GM12878 (cell line): ENCODE measurements at regions of chr15 and their contacts with region 1.

Region 1: DNA sequence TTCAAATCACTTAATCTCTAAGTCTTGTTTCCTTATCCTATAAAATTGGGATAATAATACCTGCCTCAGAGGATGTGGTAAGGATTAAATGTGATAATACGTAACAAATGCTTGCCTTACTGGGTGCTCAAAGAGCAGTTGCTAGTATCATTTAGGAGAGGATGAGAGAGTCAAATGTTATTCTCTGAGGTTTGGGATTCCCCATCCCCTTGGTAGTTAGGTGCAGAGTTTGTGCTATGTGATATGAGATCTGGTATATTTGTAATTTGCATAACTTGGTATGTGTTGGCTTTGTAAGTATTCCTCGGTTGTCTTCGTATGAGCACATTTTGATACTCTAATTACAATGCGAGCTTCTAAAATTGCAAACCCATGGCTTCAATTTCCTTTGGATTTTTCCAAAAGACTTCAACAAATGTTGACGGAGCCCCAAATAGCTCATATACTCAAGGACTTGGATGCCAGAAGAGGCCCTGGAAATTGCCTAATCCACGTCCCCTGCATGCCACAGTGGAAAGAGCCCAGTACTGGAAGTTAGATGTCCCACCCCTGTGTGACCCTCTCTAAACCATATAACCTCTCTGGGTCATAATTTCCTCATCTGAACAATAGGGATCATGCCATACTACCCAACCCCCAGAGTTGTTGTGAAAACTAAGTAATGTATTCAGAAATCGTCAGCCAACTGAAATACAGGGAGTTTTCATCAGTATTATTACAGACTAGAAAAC is 85.0 kb downstream of the FBN1 start:
- DNase-seq: peak; percentile 60
- ATAC-seq: peak; percentile 93
- H3K4me3 ChIP-seq: no peak overlapping the region
- H3K27ac ChIP-seq: no peak overlapping the region
- H3K4me1 ChIP-seq: no peaks in the 10 kb centered on the region
- H3K27me3 ChIP-seq: no peaks in the 10 kb centered on the region
- CTCF ChIP-seq: no peak
- EP300 ChIP-seq: peak; percentile 58 to 65; a peak in 2 of 4 replicates
- POLR2A ChIP-seq: no peak
- RAD21 ChIP-seq: no peak

Region 2: DNA sequence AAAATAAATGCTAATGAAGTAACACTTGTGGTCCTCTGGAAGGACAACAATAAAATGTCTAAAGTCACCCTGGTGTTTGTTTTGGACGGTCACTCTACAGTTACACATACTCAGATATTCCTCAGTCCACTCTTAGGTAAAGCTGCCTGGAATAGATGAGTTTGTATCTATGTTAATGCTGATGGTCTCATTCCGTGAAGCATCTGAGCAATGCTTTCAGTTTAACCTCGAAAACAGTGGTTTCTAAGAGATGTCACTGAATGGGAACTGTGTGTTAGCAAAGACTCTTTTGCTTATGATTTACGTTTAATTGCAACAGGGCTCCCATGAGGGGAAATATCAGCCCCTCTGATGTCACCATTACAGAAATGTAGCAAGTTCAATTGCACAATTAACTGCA is 35.9 kb after region 1 on chr15:
- CTCF ChIA-PET with region 1: interaction called, 3 read pairs
- POLR2A ChIA-PET with region 1: interaction called, 6 read pairs
- RAD21 ChIA-PET with region 1: interaction called, 9 read pairs
- SMC1A ChIA-PET with region 1: interaction called, 10 read pairs
- in situ Hi-C with region 1: no loop called
- intact Hi-C with region 1: no loop called
- DNase-seq: peak; percentile 36
- ATAC-seq: peak; percentile 76
- H3K4me3 ChIP-seq: peak overlapping the region; percentile 39; the same call in 1 of the 2 replicates
- H3K27ac ChIP-seq: peak overlapping the region; percentile 49
- H3K4me1 ChIP-seq: peaks cover 11% of the 10 kb centered on the region
- H3K27me3 ChIP-seq: no peaks in the 10 kb centered on the region
- CTCF ChIP-seq: no peak
- EP300 ChIP-seq: no peak
- POLR2A ChIP-seq: no peak
- RAD21 ChIP-seq: no peak